ENCODE measurements at regions of chr10 and their contacts with region 1.

Region 1: DNA sequence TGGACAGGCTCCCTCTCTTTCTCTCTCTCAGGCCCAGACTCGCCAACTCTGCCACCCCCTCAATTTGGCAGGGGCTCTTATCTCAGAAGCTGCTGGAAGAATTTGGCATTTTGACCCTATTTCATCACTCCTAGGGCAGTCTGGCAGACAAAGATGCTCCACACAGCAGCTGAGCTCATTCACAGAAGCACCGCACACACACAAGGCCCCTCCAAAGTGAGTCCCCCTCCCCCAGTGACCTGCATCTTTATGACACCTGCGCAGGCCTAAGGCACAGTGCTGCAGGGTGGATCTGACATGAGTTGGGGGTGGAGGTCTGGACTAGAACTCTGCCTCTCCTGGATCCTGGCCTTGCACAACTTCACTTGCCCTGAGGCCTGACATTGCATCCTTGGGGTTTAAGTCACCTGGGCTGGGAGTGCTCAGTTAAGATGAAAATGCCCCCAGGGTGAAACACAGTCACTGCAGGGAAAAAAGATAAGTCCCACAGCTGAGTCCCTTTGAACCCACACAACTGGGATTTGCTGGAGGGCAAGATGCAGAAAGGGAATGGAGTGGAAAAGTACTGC is 41.1 kb upstream of the DUSP5 start:
- DNase-seq: peak; percentile 96 to 98
- H3K4me3 ChIP-seq: no peak overlapping the region
- H3K4me3 Mint-ChIP-seq: peak overlapping the region; percentile 41
- H3K27ac Mint-ChIP-seq: peak overlapping the region; percentile 88
- H3K4me1 ChIP-seq: peaks cover 36% of the 10 kb centered on the region
- H3K4me1 Mint-ChIP-seq: peaks cover 35% of the 10 kb centered on the region
- H3K27me3 ChIP-seq: no peaks in the 10 kb centered on the region
- H3K27me3 Mint-ChIP-seq: no peaks in the 10 kb centered on the region
- CTCF ChIP-seq: no peak

Region 2: GRCh38 chr10:110354322-110354766 is 102.3 kb before region 1 on chr10:
- CTCF ChIA-PET with region 1: interaction called, 5 read pairs
- POLR2A ChIA-PET with region 1: no interaction called
- intact Hi-C with region 1: loop called (anchors 2 kb)
- DNase-seq: peak; percentile 75
- H3K4me3 ChIP-seq: no peak overlapping the region
- H3K4me3 Mint-ChIP-seq: no peak overlapping the region
- H3K27ac Mint-ChIP-seq: no peak overlapping the region
- H3K4me1 ChIP-seq: peaks cover 31% of the 10 kb centered on the region
- H3K4me1 Mint-ChIP-seq: peaks cover 7% of the 10 kb centered on the region
- H3K27me3 ChIP-seq: no peaks in the 10 kb centered on the region
- H3K27me3 Mint-ChIP-seq: no peaks in the 10 kb centered on the region
- CTCF ChIP-seq: peak; percentile 58 to 72

Region 3: DNA sequence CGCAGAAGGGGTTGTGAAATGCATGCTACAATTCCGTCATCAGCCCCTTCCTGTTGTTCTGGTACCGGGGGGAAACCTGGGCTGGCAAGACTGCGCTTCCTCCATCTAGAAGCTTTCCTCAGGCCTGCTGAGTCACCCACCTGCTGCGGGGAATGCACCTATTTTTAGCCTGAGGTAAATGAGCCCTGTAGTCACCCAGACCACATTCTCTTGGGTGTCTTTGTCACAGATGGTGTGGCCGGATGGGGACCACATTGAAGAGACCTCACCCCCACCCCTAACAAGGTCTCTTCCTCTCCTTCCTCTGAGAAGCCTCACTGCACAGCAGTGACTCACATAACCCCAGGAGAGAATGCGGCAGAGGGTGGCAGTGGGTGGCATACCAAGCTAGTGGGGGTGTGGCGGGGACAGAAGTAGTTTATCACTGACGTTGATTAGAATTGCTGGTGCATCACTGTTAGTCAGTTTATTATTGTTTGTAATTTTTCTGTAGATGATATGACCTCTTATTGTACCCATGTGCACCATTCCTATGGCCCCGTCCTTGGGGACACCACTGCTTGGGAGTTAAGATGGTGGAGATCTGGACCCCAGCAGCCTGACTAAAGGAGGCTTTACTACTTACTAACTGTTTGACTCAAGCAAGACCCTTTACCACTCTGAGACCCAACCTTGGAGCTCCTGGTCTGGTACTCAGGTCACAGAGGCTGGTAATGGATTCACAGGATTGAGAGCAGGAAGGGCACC is 41.9 kb before region 1 on chr10:
- CTCF ChIA-PET with region 1: no interaction called
- POLR2A ChIA-PET with region 1: interaction called, 3 read pairs
- intact Hi-C with region 1: loop called (anchors 1 kb)
- DNase-seq: peak in 1 of 2 experiments; percentile 51
- H3K4me3 ChIP-seq: no peak overlapping the region
- H3K4me3 Mint-ChIP-seq: no peak overlapping the region
- H3K27ac Mint-ChIP-seq: peak overlapping the region; percentile 84
- H3K4me1 ChIP-seq: peaks cover 61% of the 10 kb centered on the region
- H3K4me1 Mint-ChIP-seq: peaks cover 46% of the 10 kb centered on the region
- H3K27me3 ChIP-seq: no peaks in the 10 kb centered on the region
- H3K27me3 Mint-ChIP-seq: no peaks in the 10 kb centered on the region
- CTCF ChIP-seq: no peak

Region 4: DNA sequence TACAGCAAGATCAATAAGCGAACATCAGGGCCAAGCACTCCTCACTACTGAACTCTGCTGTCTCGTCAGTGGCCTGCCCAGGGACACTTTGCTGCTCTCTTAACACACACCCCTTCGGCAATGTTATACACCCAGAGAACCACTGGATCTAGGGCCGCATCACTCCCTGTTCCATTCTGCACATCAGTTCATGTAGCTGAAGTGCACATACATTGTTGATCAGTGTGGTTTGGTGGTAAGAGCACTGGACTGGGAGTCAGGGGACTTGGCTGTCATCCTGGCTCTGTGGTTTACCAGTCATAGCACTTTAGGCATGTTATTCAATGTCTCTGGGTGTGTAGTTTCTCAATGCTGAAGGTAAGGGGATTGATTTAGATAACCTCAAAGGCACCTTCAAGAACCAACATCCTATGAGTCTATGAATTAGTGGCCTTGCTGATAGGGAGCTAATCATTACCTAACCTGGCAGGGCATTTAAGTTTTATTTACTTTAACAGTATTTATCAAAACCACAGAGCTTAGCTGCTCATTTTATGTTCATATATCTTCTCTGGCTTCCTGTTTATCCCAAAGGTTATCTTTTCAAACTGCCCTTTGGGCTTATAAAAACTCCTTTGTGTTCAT is 65.9 kb after region 1 on chr10:
- CTCF ChIA-PET with region 1: no interaction called
- POLR2A ChIA-PET with region 1: no interaction called
- intact Hi-C with region 1: loop called (anchors 2 kb)
- DNase-seq: peak in 1 of 2 experiments; percentile 45
- H3K4me3 ChIP-seq: no peak overlapping the region
- H3K4me3 Mint-ChIP-seq: no peak overlapping the region
- H3K27ac Mint-ChIP-seq: no peak overlapping the region
- H3K4me1 ChIP-seq: peaks cover 30% of the 10 kb centered on the region
- H3K4me1 Mint-ChIP-seq: peaks cover 15% of the 10 kb centered on the region
- H3K27me3 ChIP-seq: no peaks in the 10 kb centered on the region
- H3K27me3 Mint-ChIP-seq: no peaks in the 10 kb centered on the region
- CTCF ChIP-seq: no peak